ENCODE measurements at regions of chr9 and their contacts with region 1.

Region 1: DNA sequence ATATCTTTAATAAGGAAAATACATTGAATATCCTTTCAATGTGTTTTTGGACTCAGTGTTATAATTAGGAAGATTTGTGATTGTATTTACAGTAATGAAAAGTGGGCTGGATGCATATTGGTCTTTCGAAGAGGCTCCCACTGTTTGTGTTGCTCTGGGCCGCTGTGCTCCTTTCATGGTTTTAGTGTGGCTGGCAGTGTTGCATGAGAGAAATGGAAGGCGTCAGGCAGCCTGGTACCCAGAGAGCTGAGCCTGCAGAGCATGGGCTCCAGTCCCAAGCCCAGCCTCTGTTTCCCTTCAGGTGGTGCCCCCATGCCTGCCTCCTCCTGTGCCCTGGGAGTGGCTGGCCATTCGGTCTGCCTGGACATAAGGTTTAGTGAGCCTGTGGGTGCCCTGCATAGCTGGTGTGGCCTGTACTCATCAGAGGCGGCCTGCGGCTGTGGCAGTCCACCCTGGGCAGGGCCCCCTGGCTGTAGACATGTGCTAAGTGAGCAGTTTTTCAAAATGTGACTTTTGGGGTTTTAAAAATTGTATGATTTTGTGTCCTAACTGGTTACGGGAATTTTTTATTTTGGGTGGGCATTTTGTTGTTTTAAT is 27.4 kb upstream of the FAM120AOS start:
- DNase-seq: no peak
- H3K4me3 ChIP-seq: no peak overlapping the region
- H3K27ac ChIP-seq: no peak overlapping the region
- H3K4me1 ChIP-seq: peaks cover 0 to 3% (median 0%) of the 10 kb centered on the region in 4 donors
- H3K27me3 ChIP-seq: no peaks in the 10 kb centered on the region
- CTCF ChIP-seq: no peak

Region 2: GRCh38 chr9:93427655-93428379 is 53.0 kb before region 1 on chr9:
- intact Hi-C with region 1: loop called (anchors 10 kb)
- DNase-seq: no peak
- H3K4me3 ChIP-seq: no peak overlapping the region
- H3K27ac ChIP-seq: no peak overlapping the region
- H3K4me1 ChIP-seq: no peaks in the 10 kb centered on the region
- H3K27me3 ChIP-seq: no peaks in the 10 kb centered on the region
- CTCF ChIP-seq: no peak

Region 3: DNA sequence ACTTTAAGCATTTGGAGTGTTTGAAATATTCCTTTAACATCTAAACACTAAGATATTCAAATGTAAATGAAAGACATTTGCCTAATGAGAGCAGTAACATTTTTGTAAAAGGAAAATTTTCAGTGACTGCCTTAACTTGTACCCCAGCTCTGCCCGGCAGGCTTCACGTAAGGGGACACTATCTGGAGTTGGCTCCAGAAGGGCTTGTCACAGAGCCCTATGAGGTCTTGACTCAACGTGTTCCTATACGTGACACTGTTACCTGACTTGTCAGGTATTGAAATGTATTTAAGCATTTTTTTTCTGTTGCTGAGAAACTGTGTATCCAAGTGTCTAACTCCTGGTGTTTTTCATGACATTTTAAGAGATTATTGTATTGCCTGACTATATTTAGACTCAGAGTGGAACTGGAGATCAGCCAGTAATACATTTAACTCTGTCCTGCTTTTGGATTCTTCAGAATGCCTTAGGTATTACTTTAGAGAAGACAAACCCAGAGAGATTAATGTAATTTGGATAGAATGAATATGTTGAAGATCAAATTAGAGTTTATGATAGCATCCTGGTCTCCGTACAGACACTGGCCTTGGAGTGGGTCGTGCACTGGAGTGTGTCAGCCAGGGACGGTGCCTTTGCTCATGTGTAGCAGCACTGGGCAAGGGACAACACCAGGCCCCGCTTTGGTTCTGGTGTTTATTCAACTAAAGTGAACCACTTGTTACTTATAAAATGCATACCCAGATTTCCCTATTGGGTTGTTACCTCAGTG is 60.9 kb after region 1 on chr9:
- intact Hi-C with region 1: no loop called
- DNase-seq: no peak
- H3K4me3 ChIP-seq: no peak overlapping the region
- H3K27ac ChIP-seq: peak overlapping the region in 1 of 2 donors; percentile 15
- H3K4me1 ChIP-seq: peaks cover 0 to 17% (median 7%) of the 10 kb centered on the region in 4 donors
- H3K27me3 ChIP-seq: no peaks in the 10 kb centered on the region
- CTCF ChIP-seq: no peak